ENCODE measurements at regions of chr1 and their contacts with region 1.

Region 1: GRCh38 chr1:164673584-164674214 is 114.7 kb downstream of the PBX1 start:
- DNase-seq: no peak
- H3K4me3 Mint-ChIP-seq: no peak overlapping the region
- H3K27ac Mint-ChIP-seq: no peak overlapping the region
- H3K4me1 Mint-ChIP-seq: no peaks in the 10 kb centered on the region
- H3K27me3 Mint-ChIP-seq: no peaks in the 10 kb centered on the region

Region 2: DNA sequence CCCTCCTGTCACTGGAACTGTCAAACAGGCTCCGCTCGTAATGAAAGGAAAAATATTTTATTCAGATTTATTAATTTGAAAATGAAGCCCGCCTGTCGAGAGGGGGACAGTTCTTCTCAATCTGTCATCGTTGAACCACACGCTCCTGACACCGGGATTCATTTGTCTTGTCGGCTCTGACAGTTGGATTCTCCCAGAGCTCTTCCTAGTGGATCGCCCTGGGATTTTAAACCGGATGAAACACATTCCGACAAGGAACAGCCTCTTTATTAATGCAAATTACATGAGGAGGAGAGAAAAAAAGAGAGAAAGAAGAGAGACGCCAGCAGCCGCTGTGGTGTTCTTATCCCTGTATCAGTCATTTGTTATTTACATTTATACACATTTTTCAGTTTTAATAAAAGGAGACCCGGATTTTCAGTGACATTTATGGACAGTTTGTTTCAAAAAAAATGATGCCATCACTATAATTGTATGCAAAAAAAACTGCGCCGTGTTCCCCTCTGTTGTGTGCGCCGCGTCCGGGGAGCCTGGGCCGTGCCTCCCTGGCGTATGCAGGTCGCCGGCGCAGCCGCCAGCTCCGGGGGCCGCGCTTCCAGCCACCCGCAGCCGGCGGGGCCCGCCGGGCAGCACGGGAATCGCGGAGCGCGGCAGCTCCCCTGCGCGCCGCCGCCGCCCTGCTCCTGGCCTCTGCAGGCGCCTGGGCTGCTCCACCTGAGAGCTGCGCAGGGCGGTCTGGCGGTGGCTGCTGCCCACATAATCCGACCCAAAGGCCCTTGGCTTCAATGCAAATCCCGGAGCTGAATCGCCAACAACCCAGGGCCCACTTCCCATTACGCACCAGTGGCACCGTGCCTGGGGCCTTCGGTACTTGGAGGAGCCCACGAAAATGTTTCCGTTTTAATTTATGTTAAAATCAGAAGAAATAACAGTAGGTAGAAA is 352.6 kb before region 1 on chr1:
- CTCF ChIA-PET with region 1: no interaction called
- intact Hi-C with region 1: no loop called
- DNase-seq: no peak
- H3K4me3 Mint-ChIP-seq: no peak overlapping the region
- H3K27ac Mint-ChIP-seq: no peak overlapping the region
- H3K4me1 Mint-ChIP-seq: no peaks in the 10 kb centered on the region
- H3K27me3 Mint-ChIP-seq: peaks cover 12% of the 10 kb centered on the region

Region 3: DNA sequence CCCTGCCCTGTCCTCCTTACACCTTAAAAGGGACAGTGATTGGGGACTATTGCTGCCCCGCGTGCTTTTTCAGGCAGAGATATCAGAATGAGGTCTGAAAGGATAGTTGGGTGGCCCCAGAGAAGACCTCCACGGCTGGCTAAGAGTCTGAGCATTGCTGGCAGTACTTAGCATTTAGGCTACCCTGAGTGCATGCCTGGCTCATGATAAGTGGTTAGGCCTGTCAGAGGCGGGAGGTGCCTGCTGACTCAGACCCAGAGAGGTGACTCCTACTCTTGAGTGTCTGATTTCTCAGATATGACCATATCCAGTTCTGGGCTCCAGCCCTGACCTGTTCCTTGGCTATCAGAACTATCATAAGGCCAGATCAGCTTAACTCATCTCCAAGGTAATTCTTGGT is 98.9 kb after region 1 on chr1:
- CTCF ChIA-PET with region 1: no interaction called
- intact Hi-C with region 1: no loop called
- DNase-seq: peak; percentile 16
- H3K4me3 Mint-ChIP-seq: no peak overlapping the region
- H3K27ac Mint-ChIP-seq: no peak overlapping the region
- H3K4me1 Mint-ChIP-seq: no peaks in the 10 kb centered on the region
- H3K27me3 Mint-ChIP-seq: peaks cover 2% of the 10 kb centered on the region

Region 4: DNA sequence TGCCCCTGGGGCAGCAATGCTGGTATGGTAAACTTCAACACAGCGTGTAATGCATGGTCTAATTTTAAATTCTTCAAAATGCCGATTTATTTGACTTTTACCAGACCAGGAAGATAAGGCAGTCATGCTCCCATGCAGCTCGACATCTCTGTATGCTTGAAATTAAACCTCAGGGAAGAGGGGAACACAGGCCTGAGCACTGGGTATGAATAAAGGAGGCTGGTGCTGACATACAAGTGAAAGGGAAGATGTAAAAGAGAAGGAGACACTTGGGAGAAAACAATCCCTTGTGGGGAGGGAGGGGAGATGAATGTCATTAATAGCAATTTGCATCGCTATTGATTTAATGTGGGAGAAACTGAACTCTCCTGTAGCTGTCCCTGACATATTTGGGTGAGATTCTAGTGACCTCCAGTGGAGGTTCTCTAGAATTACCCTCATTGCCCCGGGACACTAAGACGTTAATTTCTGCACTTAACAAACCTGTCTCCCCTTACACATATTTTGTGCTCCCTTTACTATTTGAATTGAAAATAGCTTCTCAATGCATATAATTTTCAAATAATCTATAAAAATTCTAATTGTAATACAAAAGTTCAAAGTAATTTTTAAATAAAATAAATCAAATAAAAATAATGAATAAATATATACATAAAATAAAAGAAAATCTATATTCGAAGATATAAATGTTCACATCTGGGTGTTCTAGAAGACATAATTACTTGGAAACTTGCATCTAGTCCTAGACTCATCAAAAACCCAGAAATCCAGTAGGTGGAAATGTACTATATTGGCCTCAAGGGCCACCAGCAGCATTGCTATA is 399.7 kb after region 1 on chr1:
- CTCF ChIA-PET with region 1: no interaction called
- intact Hi-C with region 1: loop called (anchors 10 kb)
- DNase-seq: no peak
- H3K4me3 Mint-ChIP-seq: no peak overlapping the region
- H3K27ac Mint-ChIP-seq: no peak overlapping the region
- H3K4me1 Mint-ChIP-seq: no peaks in the 10 kb centered on the region
- H3K27me3 Mint-ChIP-seq: no peaks in the 10 kb centered on the region

Measured in activated naive CD4-positive, alpha-beta T cell treated with anti-CD3 and anti-CD28 coated beads for 36 hours (primary cell).